Mammary epithelial cell (primary cell): ENCODE measurements at regions of chr11 and their contacts with region 1.

Region 1: DNA sequence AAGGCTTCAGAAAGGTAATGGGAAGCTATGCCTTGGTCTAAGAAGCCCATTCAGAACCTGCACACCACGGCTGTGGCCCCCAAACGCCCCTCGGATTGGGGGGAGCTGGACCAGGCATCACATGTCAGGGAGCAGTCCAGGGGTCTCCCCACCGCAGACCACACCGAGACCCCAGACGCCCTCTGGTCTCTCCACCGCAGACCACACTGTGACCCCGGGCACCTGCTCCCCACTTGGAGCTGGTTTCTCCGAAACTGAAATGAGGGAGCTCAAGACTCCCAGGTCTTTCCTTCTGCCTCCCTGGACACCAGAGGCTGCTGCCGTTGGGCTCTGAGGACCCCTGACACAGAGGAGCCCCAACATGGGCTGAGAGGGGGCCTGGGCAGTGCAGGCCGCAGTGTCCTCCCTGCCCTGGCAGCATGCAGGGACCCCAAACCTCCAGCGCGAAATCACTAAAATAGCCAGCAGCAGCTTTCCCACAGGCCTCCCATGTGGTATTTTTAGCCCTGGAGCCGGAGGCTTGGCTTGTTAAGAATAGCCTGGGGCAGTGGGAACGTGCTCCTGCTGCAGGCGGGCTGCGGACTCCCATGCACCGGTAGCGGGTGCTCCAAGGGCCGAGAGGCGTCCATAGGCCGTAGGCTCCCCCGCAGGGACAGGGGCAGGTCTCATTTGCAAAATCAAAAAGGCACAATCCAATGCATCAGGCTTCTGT is 7.7 kb downstream of the LINC01488 start:
- DNase-seq: no peak
- H3K4me3 ChIP-seq: no peak overlapping the region
- H3K27ac ChIP-seq: no peak overlapping the region
- H3K4me1 ChIP-seq: no peaks in the 10 kb centered on the region
- H3K27me3 ChIP-seq: no peaks in the 10 kb centered on the region
- CTCF ChIP-seq: no peak

Region 2: DNA sequence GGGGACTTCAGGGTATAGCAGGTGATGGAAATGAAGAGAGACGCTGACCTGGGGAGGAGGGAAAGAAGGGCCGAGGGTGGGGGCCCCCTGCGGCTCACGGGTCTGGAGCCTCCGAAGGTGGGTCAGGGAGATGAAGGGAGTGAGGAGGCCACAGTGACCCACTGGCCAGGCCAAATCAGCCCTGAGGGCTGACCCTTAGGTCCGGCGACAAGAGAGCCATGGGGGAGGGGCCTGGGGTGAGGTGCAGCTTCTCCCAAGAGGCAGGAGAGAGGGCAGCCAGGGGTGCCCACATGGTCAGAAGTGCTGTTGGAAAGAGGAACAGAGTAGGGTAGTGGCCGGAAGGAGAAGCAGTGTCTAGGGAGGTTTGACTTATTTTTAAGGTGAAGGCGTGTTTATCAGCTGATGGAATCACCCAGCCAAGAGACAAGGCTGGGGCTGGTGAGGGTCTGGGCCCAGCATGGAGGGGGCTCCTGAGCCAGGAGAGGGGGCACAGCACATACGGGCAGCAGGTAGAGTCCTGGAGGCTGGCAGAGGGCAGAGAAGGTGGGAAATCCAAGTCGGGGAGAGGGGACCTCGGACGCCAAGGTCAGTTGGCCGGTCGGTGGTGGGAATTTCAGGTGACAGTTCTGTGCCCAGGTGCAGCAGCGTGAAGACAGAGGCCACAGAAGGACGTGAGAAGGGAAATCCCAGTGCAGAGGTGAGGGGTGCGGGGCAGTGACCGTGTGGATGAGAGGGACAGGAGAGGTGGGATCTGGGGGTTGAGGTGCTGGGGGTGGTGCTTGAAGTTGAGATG is 41.3 kb after region 1 on chr11:
- CTCF ChIA-PET with region 1: no interaction called
- dilution Hi-C with region 1: loop called (anchors 5 kb)
- in situ Hi-C with region 1: no loop called
- intact Hi-C with region 1: no loop called
- DNase-seq: no peak
- H3K4me3 ChIP-seq: no peak overlapping the region
- H3K27ac ChIP-seq: no peak overlapping the region
- H3K4me1 ChIP-seq: peaks cover 1% of the 10 kb centered on the region
- H3K27me3 ChIP-seq: no peaks in the 10 kb centered on the region
- CTCF ChIP-seq: no peak